A549 (cell line): ENCODE measurements at regions of chr12 and their contacts with region 1.

Region 1: DNA sequence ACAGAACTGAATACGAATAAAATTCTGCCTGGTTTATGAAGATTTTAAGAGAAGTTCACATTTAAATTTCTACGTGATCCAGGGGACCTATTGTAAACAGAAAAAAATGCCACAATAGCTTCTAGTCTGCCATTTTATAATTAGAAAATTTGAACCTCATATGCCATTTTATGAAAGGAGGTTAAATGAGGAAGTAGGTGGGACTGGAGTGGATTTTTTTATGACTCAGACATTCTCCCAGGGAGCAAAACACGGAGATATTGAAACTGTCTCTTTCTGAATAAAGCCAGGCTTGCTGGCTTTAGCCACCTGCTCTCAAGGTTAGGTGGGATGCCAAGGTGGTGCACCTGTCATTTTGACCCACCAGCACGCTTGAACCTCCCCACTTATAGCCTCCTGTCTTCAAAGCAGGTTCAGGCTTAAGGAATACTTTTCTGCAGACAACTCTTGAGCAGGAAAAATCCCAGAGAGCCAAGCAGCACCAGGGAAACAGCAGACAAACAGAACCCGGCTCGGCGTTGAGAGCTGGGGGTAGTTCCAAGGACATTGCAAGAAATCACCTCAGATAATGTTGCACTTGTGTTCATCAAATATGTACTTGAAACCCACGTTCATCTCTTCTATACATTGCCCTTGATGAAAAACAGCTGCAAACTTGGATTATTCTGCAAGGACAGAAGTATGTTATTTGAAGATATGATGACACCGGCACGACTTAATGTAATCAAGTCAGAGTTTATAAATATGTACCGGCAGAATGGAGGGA is 203.7 kb downstream of the PPM1H start:
- DNase-seq: peak; percentile 66 to 79
- ATAC-seq: peak; percentile 29 to 51
- H3K4me3 ChIP-seq: 0 out of 3 replicates have a peak overlapping the region, but pooled peaks have one; percentile 0
- H3K27ac ChIP-seq: peak overlapping the region; percentile 94 to 98
- H3K4me1 ChIP-seq: peaks cover 92% of the 10 kb centered on the region
- CTCF ChIP-seq: no peak
- EP300 ChIP-seq: 0 out of 5 replicates have a peak, but pooled peaks of 1 of the 2 experiments have one; percentile 2
- POLR2A ChIP-seq: peak; percentile 15; the same call in 1 of the 2 replicates
- RAD21 ChIP-seq: peak in 1 of 2 experiments; percentile 1; a peak in 2 of 5 replicates

Region 2: DNA sequence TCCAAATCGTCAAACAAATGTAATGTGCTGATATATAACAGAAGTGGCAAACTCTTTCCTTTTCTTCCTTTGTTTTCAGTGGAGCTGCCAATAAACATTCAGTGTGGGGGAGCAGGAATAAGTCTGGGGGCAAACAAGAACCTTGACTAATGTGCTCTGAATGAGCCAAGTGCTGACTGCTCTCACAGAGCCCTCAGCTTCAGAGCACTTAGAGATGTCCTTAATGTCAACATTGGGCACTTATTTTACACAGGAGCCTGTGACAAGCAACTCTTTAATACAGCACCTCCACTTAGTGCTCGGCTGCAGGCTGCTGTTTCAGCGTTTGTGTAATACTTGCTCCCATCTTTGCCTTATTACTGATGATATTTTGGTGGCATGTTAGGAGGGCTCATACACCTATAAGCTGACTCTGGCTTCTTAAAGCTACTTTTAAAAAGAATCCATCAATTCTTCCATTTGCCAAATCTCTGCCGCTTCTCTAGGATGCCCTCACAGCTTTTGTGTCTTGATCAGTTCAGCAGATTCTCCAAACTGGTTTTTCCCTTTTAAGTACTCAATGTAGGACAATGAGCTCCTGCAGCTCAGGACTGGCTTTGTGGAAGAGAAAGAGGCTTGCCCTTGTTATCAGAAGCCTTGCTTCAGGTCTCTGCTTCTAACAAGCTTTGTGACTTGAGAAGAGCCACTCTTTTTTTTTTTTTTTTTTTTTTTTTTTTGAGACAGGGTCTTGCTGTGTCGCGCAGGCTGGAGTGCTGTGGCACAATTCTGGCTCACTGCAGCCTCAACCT is 58.0 kb before region 1 on chr12:
- CTCF ChIA-PET with region 1: no interaction called
- POLR2A ChIA-PET with region 1: no interaction called
- DNase-seq: no peak
- ATAC-seq: no peak
- H3K4me3 ChIP-seq: no peak overlapping the region
- H3K27ac ChIP-seq: no peak overlapping the region; a peak in 1 of 6 replicates
- H3K4me1 ChIP-seq: no peaks in the 10 kb centered on the region
- CTCF ChIP-seq: no peak
- EP300 ChIP-seq: no peak
- POLR2A ChIP-seq: no peak
- RAD21 ChIP-seq: no peak

Region 3: DNA sequence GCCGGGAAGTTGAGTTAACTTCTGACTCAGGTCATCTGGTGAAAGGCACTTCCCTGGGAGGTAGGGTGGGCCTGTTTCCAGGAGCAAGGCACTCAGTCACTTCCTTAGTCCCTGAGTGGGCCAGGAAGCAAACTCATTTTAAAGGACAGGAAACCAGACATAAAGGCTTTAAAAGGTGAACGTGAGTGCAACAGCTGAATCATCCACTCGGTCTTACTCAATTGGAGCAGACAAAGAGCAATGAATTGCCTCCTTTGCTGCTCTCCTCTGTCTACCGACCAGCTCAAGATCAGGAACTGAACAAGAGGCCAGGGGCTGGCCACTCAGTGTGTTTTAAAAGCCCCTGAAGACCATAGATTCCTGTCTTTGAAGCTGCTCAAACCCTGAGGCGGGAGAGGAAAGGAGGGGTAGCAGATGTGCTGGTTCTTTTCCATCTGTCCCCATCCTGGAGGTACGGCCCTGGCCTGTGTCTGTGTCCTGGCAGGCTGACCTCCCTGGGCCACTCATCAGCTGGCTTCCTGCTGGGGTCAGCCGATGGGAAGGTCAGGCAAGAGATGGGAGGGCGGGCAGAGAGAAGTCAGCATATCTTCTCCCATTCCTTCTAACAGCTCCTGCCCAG is 54.8 kb after region 1 on chr12:
- CTCF ChIA-PET with region 1: interaction called, 4 read pairs
- POLR2A ChIA-PET with region 1: interaction called, 27 read pairs
- DNase-seq: peak; percentile 82 to 99
- ATAC-seq: peak; percentile 93
- H3K4me3 ChIP-seq: no peak overlapping the region
- H3K27ac ChIP-seq: peak overlapping the region; percentile 91 to 94
- H3K4me1 ChIP-seq: peaks cover 64% of the 10 kb centered on the region
- CTCF ChIP-seq: no peak
- EP300 ChIP-seq: peak; percentile 92 to 96; a peak in 4 of 5 replicates
- POLR2A ChIP-seq: peak; percentile 25
- RAD21 ChIP-seq: peak; percentile 31 to 63; a peak in 4 of 5 replicates